Left lung (tissue), 14 donors: ENCODE measurements at regions of chr7 and their contacts with region 1.

Region 1: DNA sequence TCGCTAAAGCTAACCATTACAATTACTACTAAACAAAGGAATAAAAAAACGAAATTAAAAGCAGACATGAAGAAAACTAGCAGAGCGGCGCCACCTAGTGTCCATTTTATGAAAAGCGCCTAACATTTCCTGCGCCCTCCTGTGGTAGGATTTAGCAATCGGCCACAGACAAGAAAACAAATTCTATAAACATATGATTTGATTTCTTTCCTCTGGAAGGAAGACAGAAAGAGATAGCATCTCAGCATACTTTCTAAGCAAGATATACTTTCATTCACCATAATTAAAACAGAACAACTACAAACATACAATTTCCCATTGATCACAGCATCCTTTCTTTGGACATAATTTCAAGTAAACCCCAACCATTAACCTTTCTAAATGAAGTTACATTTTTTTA is 337.7 kb upstream of the NPVF start:
- DNase-seq: peak in 3 of 4 donors; percentile 50 to 85 (median 81)
- ATAC-seq: peak; percentile 71
- H3K4me3 ChIP-seq: no peak overlapping the region
- H3K27ac ChIP-seq: no peak overlapping the region
- H3K4me1 ChIP-seq: no peaks in the 10 kb centered on the region
- H3K27me3 ChIP-seq: no peaks in the 10 kb centered on the region
- CTCF ChIP-seq: peak; percentile 93 to 100

Region 2: DNA sequence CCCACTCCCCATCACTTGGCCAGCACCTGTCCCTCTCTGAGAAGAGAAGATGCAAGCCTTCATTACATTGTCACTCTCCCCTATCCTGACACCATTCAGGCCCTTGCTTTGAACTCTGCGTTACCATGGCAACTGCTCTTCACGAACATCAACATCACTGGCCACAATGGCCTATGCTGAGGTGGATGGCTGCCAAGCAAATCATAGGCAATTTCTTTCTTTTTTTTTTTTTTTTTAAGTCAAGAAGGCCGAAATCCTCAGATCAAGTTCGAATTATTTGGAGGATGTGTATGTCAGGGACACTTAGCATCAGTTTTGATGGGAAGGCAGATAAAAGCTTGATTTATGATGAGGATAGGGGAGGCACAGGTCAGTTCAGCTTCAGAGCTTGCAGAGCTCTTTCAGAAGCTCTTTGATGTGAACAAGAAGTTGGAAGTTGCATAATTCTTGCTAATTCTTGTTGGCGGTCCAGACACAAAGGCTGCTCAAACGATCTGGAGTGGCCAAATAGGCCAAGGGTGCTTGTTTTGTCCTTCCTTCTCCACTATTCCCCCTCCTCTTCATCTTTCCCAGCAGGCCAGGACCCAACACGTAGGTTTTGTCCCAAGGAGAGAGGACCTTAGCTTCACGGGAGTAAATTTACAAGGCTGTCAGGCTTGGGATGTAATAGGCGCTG is 157.8 kb before region 1 on chr7:
- intact Hi-C with region 1: loop called in 1 of 2 experiments (anchors 10 kb)
- DNase-seq: no peak
- ATAC-seq: no peak
- H3K4me3 ChIP-seq: no peak overlapping the region
- H3K27ac ChIP-seq: no peak overlapping the region
- H3K4me1 ChIP-seq: no peaks in the 10 kb centered on the region
- H3K27me3 ChIP-seq: no peaks in the 10 kb centered on the region
- CTCF ChIP-seq: no peak

Region 3: GRCh38 chr7:25663877-25664276 is 97.9 kb after region 1 on chr7:
- intact Hi-C with region 1: no loop called
- DNase-seq: peak in 2 of 4 donors; percentile 47 to 67
- ATAC-seq: no peak
- H3K4me3 ChIP-seq: no peak overlapping the region
- H3K27ac ChIP-seq: no peak overlapping the region
- H3K4me1 ChIP-seq: no peaks in the 10 kb centered on the region
- H3K27me3 ChIP-seq: no peaks in the 10 kb centered on the region
- CTCF ChIP-seq: no peak